ENCODE measurements at regions of chrX and their contacts with region 1.

Region 1: DNA sequence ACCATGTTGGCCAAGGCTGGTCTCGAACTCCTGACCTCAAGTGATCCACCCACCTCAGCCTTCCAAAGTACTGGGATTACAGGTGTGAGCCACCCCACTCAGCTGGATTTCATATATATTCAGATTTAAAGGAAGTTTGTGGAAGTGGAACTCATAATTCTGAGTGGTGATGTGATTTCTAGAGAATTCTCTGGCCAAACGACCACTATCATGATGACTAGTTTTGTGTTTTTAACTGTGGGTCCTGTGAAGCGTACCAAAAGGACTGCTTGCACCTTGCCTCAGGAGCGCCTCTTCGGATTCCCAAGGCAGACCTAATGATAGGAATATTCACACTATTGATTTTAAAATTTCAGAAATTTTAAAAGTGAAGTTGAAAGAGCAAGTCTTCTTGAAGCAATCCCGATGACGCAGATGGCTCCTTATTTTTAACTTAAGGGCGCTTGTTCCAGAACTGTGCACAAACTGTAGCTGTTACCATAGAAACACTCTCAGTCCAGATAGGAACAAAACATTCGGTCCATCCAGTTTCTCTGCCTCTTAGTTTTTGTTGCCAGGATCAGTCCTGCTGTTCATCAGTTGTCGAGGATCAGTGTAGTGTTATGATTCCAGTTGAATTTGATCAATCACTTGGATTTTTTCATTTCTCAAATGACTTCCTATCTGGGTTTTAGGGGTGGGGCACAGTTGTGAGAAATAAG is 51.7 kb upstream of the CLCN4 start:
- DNase-seq: no peak
- H3K4me3 ChIP-seq: no peak overlapping the region
- H3K27ac ChIP-seq: peak overlapping the region; percentile 49 to 51
- H3K4me1 ChIP-seq: peaks cover 0 to 2% of the 10 kb centered on the region in 2 donors
- H3K27me3 ChIP-seq: no peaks in the 10 kb centered on the region
- CTCF ChIP-seq: no peak

Region 2: DNA sequence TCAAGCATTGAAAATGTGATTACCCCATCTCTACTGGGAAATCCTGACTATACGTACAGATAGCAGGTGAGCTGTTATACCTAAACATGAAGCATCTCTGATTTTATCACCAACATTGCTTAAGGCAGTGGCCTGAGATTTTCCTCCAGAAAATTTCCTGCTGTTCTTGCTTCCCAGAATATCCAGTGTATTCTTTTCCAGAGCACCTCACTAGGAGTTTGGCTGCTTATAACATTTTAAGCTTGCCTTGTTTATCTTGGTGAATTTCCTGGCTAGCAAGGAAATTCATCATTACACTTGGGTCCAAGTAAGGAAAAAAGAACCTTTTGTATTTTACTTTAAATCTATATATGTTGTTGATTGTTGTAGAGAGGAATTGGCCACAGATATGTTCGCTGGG is 21.3 kb before region 1 on chrX:
- intact Hi-C with region 1: loop called (anchors 2 kb)
- DNase-seq: no peak
- H3K4me3 ChIP-seq: peak overlapping the region in 1 of 2 donors; percentile 40
- H3K27ac ChIP-seq: peak overlapping the region; percentile 54 to 71
- H3K4me1 ChIP-seq: peaks cover 0 to 11% of the 10 kb centered on the region in 2 donors
- H3K27me3 ChIP-seq: no peaks in the 10 kb centered on the region
- CTCF ChIP-seq: no peak

Region 3: DNA sequence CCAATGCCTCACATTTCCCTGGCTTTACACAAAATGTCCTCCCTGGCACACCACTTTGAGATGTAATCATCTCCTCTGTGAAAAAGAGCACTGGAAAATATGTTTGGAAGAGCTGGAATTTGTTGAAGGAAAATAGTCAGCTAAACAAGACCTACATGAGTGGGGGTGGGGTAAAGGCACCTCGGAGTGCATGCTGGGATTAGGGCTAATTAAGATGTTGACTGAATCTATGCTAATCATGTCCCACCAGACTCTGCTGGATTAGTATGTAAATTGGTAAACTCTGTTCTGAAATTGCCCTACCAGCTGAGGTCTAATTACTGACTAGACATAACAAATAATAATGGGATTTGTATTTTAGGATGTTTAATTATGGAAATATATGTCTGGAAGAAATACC is 562.0 kb after region 1 on chrX:
- intact Hi-C with region 1: no loop called
- DNase-seq: no peak
- H3K4me3 ChIP-seq: no peak overlapping the region
- H3K27ac ChIP-seq: no peak overlapping the region
- H3K4me1 ChIP-seq: no peaks in the 10 kb centered on the region
- H3K27me3 ChIP-seq: no peaks in the 10 kb centered on the region
- CTCF ChIP-seq: no peak